Sciatic nerve (tissue), 2 donors: ENCODE measurements at regions of chr2 and their contacts with region 1.

Region 1: DNA sequence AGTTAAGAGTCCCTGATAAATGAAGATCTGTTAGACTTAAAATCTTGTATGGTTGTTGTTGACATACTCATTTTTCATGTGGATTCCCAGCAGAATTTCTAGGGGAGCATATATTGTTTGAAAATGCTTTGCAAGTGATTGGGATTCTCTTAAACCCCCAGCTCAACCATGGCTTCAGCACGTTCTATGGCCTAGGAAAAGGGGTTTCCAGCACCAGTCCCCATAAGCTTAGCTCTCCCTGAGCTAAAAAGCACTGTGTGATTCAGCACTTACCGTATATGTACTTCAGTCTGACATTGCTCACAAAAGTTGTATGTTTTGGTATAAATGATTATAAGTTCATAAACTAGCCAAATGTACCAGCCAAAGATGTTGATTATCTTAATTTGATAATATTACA is 80.1 kb upstream of the EPB41L5 start:
- DNase-seq: no peak
- ATAC-seq: no peak

Region 2: GRCh38 chr2:120641366-120641771 is 708.6 kb after region 1 on chr2:
- intact Hi-C with region 1: loop called (anchors 5 kb)
- DNase-seq: no peak
- ATAC-seq: peak; percentile 51